ENCODE measurements at regions of chr1 and their contacts with region 1.

Region 1: GRCh38 chr1:41516168-41517061 is 31.9 kb upstream of the EDN2 start:
- DNase-seq: peak; percentile 94
- H3K4me3 Mint-ChIP-seq: peak overlapping the region; percentile 69
- H3K27ac Mint-ChIP-seq: peak overlapping the region; percentile 79
- H3K4me1 Mint-ChIP-seq: peaks cover 35% of the 10 kb centered on the region
- H3K27me3 Mint-ChIP-seq: peaks cover 16% of the 10 kb centered on the region
- CTCF ChIP-seq: peak; percentile 81

Region 2: GRCh38 chr1:41464885-41465284 is 51.5 kb before region 1 on chr1:
- CTCF ChIA-PET with region 1: no interaction called
- intact Hi-C with region 1: no loop called
- DNase-seq: no peak
- H3K4me3 Mint-ChIP-seq: no peak overlapping the region
- H3K27ac Mint-ChIP-seq: no peak overlapping the region
- H3K4me1 Mint-ChIP-seq: peaks cover 12% of the 10 kb centered on the region
- H3K27me3 Mint-ChIP-seq: peaks cover 6% of the 10 kb centered on the region
- CTCF ChIP-seq: no peak

Region 3: DNA sequence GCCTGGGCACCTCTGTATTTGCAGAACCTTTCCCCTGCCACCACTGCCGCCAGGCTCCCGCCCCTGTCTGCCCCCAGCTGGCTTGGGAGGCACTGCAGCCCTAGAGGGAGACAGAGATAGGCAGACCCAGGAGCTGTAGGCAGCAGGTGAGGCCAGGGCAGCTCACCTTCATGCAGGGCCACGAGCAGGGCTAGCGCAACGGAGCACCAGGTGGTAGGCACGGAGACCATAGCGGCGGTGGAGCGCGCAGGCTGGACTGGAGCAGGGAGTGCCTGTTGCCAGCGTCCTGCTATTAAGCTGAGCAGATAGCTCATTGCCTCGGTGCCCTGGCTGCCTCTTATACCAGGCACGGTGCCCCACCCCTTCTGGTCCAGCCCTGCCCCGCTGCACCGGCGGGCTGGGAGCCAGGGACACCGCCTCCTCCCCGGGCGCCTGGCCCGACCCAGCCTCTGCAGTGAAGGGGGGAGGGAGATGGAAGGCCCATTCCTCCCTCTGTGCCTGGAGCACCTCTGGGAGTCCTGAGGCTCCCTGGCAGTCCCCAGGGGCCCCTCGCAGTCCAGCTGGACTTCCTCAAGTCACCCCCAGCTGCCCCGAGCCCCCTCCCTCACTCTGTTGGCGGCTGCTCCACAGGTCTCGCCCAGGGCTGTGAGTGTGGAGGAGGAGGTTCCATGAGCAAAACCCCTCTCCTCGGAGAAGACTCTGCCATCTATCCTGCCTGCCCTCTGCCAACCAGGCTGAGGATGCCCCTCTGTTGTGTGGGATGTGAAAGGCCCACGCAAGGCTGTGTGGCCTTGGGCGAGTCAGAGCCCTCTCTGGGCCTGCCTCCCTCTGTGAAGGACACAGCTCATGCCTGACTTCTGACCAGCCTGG is 31.8 kb before region 1 on chr1 and contains the start of gene EDN2:
- CTCF ChIA-PET with region 1: interaction called, 30 read pairs
- intact Hi-C with region 1: no loop called
- DNase-seq: peak; percentile 76
- H3K4me3 Mint-ChIP-seq: peak within 1 kb of the TSS; percentile 53
- H3K27ac Mint-ChIP-seq: no peak within 1 kb of the TSS
- H3K4me1 Mint-ChIP-seq: peaks cover 44% of the 10 kb centered on the region
- H3K27me3 Mint-ChIP-seq: peaks cover 6% of the 10 kb centered on the region
- CTCF ChIP-seq: peak; percentile 51
- total RNA-seq, gene EDN2: 0.28 TPM in 1 of 2 replicates, not detected in the other

Region 4: GRCh38 chr1:41492341-41492848 is 24.0 kb before region 1 on chr1:
- CTCF ChIA-PET with region 1: interaction called, 27 read pairs
- intact Hi-C with region 1: no loop called
- DNase-seq: peak; percentile 65
- H3K4me3 Mint-ChIP-seq: no peak overlapping the region
- H3K27ac Mint-ChIP-seq: no peak overlapping the region
- H3K4me1 Mint-ChIP-seq: peaks cover 9% of the 10 kb centered on the region
- H3K27me3 Mint-ChIP-seq: peaks cover 14% of the 10 kb centered on the region
- CTCF ChIP-seq: peak; percentile 53

Region 5: DNA sequence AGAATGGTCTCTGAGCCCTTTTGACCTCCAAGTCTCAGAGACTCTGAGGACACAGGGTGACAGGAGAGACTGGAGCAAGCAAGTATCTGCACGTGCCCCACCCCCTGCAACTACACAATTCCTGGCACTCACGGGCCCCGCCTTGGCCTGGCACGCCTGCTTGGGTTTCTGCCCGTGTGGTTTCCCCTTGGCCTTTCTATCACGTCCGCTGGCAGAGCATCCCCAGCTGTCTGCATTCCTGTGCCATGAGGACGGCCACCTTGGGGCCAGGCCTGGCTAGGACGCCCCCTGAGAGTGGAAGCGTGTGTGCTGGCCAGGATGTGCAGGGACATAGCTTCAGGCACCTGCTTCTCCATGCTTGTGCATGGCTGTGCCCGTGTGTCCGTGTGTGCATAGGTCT is 17.6 kb before region 1 on chr1:
- CTCF ChIA-PET with region 1: interaction called, 27 read pairs
- intact Hi-C with region 1: no loop called
- DNase-seq: peak; percentile 80
- H3K4me3 Mint-ChIP-seq: no peak overlapping the region
- H3K27ac Mint-ChIP-seq: peak overlapping the region; percentile 12
- H3K4me1 Mint-ChIP-seq: peaks cover 45% of the 10 kb centered on the region
- H3K27me3 Mint-ChIP-seq: no peaks in the 10 kb centered on the region
- CTCF ChIP-seq: no peak